HepG2 (cell line): ENCODE measurements at regions of chr20 and their contacts with region 1.

Region 1: GRCh38 chr20:57342829-57343228 is 8.2 kb upstream of the RAE1 start:
- DNase-seq: no peak
- ATAC-seq: no peak
- H3K4me3 ChIP-seq: no peak overlapping the region
- H3K27ac ChIP-seq: no peak overlapping the region
- H3K4me1 ChIP-seq: no peaks in the 10 kb centered on the region
- H3K27me3 ChIP-seq: no peaks in the 10 kb centered on the region
- CTCF ChIP-seq: no peak
- EP300 ChIP-seq: no peak
- POLR2A ChIP-seq: no peak
- RAD21 ChIP-seq: no peak

Region 2: DNA sequence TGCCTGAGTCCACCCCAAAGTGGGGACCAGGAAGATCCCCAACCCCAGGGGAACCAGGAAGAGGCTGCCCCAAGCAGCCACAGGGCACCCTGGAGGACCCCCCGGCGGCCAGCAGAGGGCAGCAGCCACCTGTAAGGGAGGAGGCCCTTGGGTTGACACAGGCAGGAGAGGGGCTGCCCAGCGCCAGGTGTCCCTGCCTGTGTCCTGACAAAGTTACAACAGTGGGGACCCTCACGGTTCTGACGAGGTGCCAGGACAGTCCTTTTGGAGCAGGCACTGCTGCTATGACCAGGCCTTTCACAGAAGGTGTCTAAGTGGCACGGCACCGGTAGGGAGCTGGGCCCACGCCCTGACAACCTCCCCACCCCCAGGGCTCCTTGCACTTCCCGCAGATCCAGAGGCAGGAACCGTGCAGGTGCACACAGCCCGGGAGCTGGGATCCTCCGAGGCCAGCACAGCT is 253.1 kb before region 1 on chr20:
- CTCF ChIA-PET with region 1: interaction called, 176 read pairs
- POLR2A ChIA-PET with region 1: no interaction called
- in situ Hi-C with region 1: loop called (anchors 5 kb)
- intact Hi-C with region 1: loop called (anchors 1 kb)
- DNase-seq: peak; percentile 63
- ATAC-seq: peak; percentile 94
- H3K4me3 ChIP-seq: no peak overlapping the region
- H3K27ac ChIP-seq: no peak overlapping the region
- H3K4me1 ChIP-seq: no peaks in the 10 kb centered on the region
- H3K27me3 ChIP-seq: peaks cover 2 to 41% of the 10 kb centered on the region in 2 experiments; a peak in 4 of 5 replicates
- CTCF ChIP-seq: peak; percentile 99
- EP300 ChIP-seq: no peak
- POLR2A ChIP-seq: no peak
- RAD21 ChIP-seq: peak; percentile 97

Region 3: DNA sequence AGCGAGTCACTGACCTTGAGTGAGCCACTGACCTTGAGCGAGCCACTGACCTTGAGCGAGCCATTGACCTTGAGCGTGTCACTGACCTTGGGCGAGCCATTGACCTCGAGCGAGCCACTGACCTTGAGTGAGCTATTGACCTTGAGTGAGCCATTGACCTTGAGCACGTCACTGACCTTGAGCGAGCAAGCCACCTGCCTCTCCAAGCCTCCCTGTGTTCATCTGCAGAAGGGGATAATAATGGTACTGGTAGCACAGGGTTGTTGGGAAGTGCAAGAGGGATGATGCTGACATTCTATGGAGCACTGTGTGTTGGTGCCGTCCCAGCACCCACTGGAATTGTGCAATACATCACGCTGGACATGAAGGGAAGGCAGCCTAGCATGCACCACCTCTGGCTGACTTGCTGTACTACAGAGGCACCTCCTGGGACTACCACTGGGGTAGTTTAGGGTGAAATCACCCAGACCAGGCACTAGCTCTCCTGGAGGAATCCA is 121.9 kb after region 1 on chr20:
- CTCF ChIA-PET with region 1: no interaction called
- POLR2A ChIA-PET with region 1: no interaction called
- in situ Hi-C with region 1: no loop called
- intact Hi-C with region 1: no loop called
- DNase-seq: peak; percentile 81
- ATAC-seq: peak; percentile 91
- H3K4me3 ChIP-seq: no peak overlapping the region
- H3K27ac ChIP-seq: no peak overlapping the region
- H3K4me1 ChIP-seq: peaks cover 7% of the 10 kb centered on the region
- H3K27me3 ChIP-seq: peaks cover 4 to 59% of the 10 kb centered on the region in 2 experiments; a peak in 4 of 5 replicates
- CTCF ChIP-seq: peak; percentile 49
- EP300 ChIP-seq: no peak; a peak in 1 of 4 replicates
- POLR2A ChIP-seq: no peak
- RAD21 ChIP-seq: no peak